BJ (cell line): ENCODE measurements at regions of chr20 and their contacts with region 1.

Region 1: DNA sequence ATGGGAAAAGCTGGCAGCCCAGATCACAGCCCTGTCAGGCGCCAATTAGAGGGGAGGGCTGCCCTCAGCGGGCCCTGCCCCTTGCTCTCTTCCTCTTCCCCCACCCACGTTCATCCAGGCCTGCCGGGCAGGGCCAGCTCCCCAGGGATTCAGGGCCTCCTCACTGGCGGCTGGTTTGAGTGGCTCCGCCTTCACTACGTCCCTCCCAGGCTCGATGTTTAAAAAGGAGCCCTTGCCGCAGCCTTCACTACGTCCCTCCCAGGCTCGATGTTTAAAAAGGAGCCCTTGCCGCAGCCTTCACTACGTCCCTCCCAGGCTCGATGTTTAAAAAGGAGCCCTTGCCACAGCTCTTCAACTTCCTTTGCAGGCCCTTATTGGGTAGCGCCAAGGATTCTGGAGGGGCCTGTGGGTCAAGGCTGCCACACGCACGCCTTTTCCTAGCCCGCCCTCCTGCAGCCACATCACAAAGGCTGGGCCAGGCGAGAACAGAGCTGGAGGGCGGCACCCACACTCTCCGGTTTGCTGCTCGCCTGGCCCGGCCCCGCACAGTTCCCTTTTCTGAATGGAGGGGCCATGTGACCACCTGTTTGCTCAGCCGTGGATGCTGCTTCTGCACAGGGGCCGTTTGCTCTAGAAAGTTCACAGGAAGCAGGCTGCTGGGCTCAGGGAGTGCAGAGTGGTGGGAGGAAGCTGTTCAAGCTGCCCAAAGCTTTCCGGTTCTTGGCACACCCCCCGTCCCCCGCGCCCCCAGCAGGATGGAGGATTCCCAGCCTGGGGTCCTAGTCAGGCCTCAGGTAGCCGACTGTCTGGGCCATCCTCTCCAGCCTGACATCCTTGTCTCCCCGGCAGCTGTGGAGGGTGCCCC is 1.6 kb downstream of the SLC17A9 start:
- DNase-seq: no peak
- H3K4me3 ChIP-seq: peak overlapping the region; percentile 55
- H3K27me3 ChIP-seq: no peaks in the 10 kb centered on the region
- CTCF ChIP-seq: no peak

Region 2: GRCh38 chr20:62832212-62832922 is 121.7 kb before region 1 on chr20:
- CTCF ChIA-PET with region 1: no interaction called
- POLR2A ChIA-PET with region 1: no interaction called
- DNase-seq: no peak
- H3K4me3 ChIP-seq: no peak overlapping the region
- H3K27me3 ChIP-seq: peaks cover 3% of the 10 kb centered on the region; the same call in 1 of the 2 replicates
- CTCF ChIP-seq: no peak

Region 3: DNA sequence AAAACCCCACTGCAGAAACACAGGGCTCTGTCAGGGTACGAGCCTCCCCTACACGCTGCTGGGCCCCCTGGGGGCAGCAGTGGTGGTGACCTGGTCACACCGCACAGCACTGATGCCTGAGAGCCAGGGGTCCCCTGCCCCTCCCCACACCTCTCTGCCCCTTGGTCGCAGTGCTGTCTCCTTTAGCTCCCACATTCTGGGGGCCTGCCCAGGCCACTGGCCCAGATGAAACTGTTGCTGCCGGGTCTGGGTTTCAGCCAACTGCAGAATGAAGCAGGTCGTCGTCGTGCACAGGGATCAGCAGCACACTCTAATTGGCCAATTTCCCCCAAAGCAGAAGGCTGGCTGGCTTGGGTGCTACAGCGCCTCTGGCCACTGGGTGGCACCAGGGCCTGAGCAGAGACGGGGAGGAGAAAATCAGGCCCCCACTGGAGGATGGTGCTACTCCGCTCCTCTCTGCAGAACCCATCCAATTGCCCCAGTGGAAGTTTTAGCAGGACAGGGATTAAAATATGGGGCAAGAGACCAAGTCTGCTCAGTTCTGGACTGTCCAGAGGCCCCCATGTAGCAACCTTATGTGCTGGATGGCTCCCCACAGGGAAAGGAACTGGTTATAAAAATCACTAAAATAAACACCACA is 53.9 kb before region 1 on chr20:
- CTCF ChIA-PET with region 1: interaction called, 11 read pairs
- POLR2A ChIA-PET with region 1: no interaction called
- DNase-seq: no peak
- H3K4me3 ChIP-seq: no peak overlapping the region
- H3K27me3 ChIP-seq: no peaks in the 10 kb centered on the region
- CTCF ChIP-seq: peak; percentile 98

Region 4: GRCh38 chr20:62937366-62938104 is 16.5 kb before region 1 on chr20:
- CTCF ChIA-PET with region 1: interaction called, 3 read pairs
- POLR2A ChIA-PET with region 1: interaction called, 10 read pairs
- DNase-seq: peak; percentile 71
- H3K4me3 ChIP-seq: peak overlapping the region; percentile 79
- H3K27me3 ChIP-seq: no peaks in the 10 kb centered on the region
- CTCF ChIP-seq: no peak

Region 5: GRCh38 chr20:62972270-62973032 is 18.4 kb after region 1 on chr20:
- CTCF ChIA-PET with region 1: interaction called, 13 read pairs
- POLR2A ChIA-PET with region 1: no interaction called
- DNase-seq: no peak
- H3K4me3 ChIP-seq: peak overlapping the region; percentile 32
- H3K27me3 ChIP-seq: peaks cover 17% of the 10 kb centered on the region; the same call in 1 of the 2 replicates
- CTCF ChIP-seq: peak; percentile 97